Activated T-helper 1 cell treated with anti-CD3 and anti-CD28 coated beads, Interleukin-12 subunit alpha, Interleukin-12 subunit beta, Interleukin-2, Interleukin-4 antibody, amounts not matched to agents 30 ng/mL and 10 ng/mL and 1 ng/mL, durations not matched to agents 14 hours and 24 hours and 36 hours (primary cell): ENCODE measurements at regions of chr12 and their contacts with region 1.

Region 1: DNA sequence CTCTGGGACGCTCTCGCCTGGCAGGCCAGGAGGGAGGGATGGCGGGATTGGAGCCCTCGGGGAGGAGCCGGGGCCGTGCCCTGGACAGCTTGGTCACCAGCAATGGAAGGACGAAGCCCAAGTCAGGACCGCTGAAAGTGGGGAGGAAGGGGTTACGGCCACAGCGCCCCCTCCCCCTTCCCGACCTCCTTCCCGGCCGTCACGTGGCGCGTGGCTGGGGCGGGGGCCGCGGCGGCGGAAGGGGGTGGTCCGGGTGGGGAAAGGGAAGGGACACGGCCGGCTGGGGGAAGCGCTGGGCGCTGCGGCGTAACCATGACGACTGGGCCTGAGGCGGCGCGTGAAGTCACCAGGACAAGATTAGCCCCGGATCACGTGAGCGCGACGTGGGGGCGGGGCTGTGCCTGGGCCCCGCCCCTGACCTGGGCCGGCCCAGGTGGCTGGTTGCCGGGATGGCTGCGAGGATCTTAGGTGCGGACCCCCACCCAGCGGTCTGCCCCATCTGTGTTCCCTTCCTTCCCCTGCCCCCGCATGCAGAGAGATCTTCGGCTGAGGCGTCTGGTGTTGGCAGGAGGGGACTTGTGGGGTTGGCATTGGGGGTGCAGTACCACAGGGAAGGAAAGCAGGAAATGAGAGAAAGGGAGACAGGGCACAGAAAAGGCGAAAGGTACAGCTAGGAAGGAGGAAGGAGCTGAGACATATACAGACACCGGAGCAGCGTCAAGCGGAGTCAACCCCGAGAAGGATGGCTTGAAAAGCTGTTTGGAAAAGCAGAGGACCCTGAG is 6.2 kb downstream of the MAP3K12 start:
- DNase-seq: peak; percentile 86
- H3K4me3 Mint-ChIP-seq: peak overlapping the region; percentile 86
- H3K27ac Mint-ChIP-seq: peak overlapping the region; percentile 41
- H3K4me1 Mint-ChIP-seq: peaks cover 37% of the 10 kb centered on the region
- H3K27me3 Mint-ChIP-seq: no peaks in the 10 kb centered on the region

Region 2: DNA sequence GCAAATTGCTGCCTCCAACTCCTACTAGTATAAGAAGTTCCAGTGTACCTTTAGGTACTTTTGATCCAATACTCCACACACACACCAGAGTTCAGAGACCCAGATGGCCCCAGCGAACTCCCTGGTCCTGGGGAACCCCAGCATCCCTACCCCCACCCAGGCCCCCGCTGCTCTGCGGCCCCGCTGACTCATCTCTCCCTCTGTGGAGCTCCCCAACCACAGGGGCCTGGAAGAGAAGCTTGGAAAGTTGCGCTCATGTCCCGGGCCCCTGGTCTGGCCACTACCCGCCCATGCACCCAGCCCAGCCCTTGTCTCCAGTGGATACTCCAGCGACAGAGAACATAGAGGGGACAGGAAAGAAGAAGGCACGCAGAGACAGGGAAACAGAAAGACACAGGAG is 152.6 kb before region 1 on chr12:
- intact Hi-C with region 1: no loop called
- DNase-seq: no peak
- H3K4me3 Mint-ChIP-seq: no peak overlapping the region
- H3K27ac Mint-ChIP-seq: no peak overlapping the region
- H3K4me1 Mint-ChIP-seq: peaks cover 33% of the 10 kb centered on the region
- H3K27me3 Mint-ChIP-seq: peaks cover 39% of the 10 kb centered on the region

Region 3: GRCh38 chr12:53352331-53353256 is 140.4 kb before region 1 on chr12:
- intact Hi-C with region 1: no loop called
- DNase-seq: peak; percentile 78
- H3K4me3 Mint-ChIP-seq: no peak overlapping the region
- H3K27ac Mint-ChIP-seq: peak overlapping the region; percentile 47
- H3K4me1 Mint-ChIP-seq: peaks cover 10% of the 10 kb centered on the region
- H3K27me3 Mint-ChIP-seq: no peaks in the 10 kb centered on the region

Region 4: GRCh38 chr12:53476769-53477209 is 16.2 kb before region 1 on chr12:
- intact Hi-C with region 1: loop called (anchors 2 kb)
- DNase-seq: no peak
- H3K4me3 Mint-ChIP-seq: no peak overlapping the region
- H3K27ac Mint-ChIP-seq: peak overlapping the region; percentile 42
- H3K4me1 Mint-ChIP-seq: peaks cover 23% of the 10 kb centered on the region
- H3K27me3 Mint-ChIP-seq: no peaks in the 10 kb centered on the region